HEK293 (cell line): ENCODE measurements at regions of chr6 and their contacts with region 1.

Region 1: GRCh38 chr6:16128759-16129622 is at the start of gene MYLIP:
- H3K4me3 ChIP-seq: peak within 1 kb of the TSS; percentile 98
- H3K27ac ChIP-seq: peak within 1 kb of the TSS; percentile 95
- H3K4me1 ChIP-seq: peaks cover 21% of the 10 kb centered on the region
- CTCF ChIP-seq: peak; percentile 95

Region 2: GRCh38 chr6:15691250-15691869 is 437.6 kb before region 1 on chr6:
- CTCF ChIA-PET with region 1: interaction called, 31 read pairs
- POLR2A ChIA-PET with region 1: interaction called, 21 read pairs
- H3K4me3 ChIP-seq: peak overlapping the region; percentile 3
- H3K27ac ChIP-seq: no peak overlapping the region
- H3K4me1 ChIP-seq: no peaks in the 10 kb centered on the region
- CTCF ChIP-seq: peak; percentile 99

Region 3: DNA sequence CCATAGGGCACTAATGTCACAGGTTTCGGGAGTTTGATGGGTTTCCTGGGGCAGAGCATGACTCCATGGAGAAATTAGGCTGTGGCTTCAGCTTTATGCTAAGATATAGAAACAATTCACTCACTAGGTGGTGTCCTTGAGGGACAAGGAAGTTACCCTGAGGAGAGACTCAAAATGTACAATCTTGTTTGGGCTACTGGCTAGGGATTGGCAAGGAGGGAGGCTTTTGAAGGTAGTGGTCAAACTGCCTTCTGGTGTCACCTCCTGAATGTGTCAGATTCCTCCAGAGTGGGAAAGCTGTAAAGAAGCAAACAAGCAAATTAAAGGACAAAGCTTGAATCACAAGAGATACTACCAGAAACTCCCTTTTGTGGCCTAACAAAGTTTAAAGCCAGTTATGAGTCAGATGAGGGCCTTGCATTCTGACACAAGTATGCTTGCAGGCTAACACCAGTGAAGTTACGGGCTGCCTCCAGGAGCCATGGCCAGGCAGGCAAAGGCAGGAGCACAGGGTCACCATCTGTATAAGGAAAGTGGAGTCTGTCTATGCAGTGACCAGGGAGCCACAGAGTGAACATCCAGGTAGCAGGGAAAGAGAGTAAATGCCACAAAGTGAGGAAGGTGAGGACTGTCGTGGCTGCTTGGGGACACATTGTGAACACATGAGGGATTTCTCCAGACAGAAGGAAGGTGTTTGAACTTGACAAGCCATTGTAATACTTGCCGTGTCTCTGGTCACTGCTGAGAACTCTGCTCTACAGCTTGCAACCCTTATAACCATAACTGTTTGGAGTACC is 358.4 kb before region 1 on chr6:
- CTCF ChIA-PET with region 1: no interaction called
- POLR2A ChIA-PET with region 1: interaction called, 13 read pairs
- H3K4me3 ChIP-seq: no peak overlapping the region
- H3K27ac ChIP-seq: no peak overlapping the region
- H3K4me1 ChIP-seq: peaks cover 8% of the 10 kb centered on the region; the same call in 1 of the 2 replicates
- CTCF ChIP-seq: 0 out of 2 replicates have a peak, but pooled peaks have one; percentile 34

Region 4: DNA sequence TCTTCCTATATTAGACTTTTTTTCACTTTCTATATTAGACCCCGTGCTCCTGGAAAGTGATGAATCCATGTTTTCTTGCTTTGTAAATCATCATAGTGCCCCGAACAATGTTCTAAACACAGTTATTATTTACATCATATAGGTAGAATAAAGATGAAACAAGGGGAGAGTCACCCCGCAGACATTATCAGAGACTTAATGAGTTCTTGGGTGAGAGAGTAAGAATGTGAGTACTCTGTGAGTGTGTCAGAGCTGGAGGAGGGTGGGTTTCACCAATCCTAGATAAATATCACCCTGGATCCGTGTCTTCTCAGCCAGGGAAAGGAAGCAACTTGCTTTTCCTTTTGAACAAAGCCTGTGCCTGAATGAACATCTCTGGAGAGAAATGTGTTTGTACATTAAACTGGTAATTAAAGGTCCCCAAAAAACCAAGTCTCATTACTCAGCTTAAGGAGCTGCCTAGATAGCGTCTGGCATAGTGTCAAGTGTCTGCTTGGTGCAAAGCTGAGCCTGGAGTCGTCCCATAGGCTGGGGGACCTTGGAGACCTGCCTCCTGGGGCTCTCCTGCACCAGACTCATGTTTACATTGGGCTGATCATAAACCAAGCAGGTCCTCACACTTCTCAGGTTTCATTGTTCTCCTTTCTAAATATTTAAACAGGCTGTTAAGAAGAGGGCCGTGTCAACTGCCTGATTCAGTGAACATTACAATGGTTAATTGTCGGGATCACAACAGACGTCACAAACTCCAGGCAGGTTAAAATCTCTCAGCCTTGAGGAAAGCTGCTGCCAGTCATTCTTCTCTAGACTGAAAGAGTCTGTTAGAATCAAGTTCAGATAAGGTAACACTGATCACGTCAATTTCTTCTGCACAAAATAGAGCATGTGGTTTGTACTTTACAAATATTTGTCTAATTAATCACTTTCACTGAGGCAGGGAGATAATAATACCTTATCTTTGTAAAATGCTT is 179.8 kb before region 1 on chr6:
- CTCF ChIA-PET with region 1: interaction called, 3 read pairs
- POLR2A ChIA-PET with region 1: interaction called, 23 read pairs
- H3K4me3 ChIP-seq: no peak overlapping the region
- H3K27ac ChIP-seq: peak overlapping the region; percentile 80
- H3K4me1 ChIP-seq: peaks cover 54% of the 10 kb centered on the region
- CTCF ChIP-seq: no peak

Region 5: DNA sequence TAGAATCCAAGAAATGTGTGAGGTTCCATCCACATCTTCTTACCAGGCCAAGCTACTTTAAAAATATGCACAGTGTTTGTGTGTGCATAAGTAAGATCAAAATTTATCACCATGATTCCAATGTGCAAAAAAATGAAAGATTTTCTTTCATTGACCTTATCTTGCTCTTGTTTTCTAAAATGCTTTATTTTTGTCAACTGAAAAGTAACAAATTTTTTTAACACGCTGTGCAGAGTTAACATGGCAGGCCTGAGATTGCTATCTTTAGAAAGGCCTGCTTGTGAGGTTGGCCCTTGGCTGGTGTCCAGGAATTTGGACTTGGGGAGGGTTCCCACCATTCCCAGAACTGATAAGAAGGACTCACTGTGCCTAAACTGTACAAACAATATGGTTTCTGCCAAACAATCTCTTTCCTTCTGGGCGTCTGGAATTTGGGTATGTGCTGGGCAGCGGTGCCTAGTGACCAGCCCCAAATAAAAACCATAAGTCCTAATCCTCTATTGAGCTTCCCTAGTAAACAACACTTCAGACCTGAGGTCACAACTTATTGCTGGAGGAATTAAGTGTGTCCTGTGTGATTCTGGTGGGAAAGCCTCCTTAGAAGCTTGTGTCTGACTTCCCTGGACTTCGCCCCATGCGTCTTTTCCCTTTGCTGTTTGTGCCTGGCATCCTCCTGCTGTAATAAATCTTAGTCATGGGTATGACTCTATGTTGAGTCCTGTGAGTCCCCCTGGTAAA is 19.9 kb before region 1 on chr6:
- CTCF ChIA-PET with region 1: interaction called, 5 read pairs
- POLR2A ChIA-PET with region 1: interaction called, 11 read pairs
- H3K4me3 ChIP-seq: no peak overlapping the region
- H3K27ac ChIP-seq: no peak overlapping the region; the same call in 1 of the 2 replicates
- H3K4me1 ChIP-seq: peaks cover 22% of the 10 kb centered on the region
- CTCF ChIP-seq: no peak

Region 6: DNA sequence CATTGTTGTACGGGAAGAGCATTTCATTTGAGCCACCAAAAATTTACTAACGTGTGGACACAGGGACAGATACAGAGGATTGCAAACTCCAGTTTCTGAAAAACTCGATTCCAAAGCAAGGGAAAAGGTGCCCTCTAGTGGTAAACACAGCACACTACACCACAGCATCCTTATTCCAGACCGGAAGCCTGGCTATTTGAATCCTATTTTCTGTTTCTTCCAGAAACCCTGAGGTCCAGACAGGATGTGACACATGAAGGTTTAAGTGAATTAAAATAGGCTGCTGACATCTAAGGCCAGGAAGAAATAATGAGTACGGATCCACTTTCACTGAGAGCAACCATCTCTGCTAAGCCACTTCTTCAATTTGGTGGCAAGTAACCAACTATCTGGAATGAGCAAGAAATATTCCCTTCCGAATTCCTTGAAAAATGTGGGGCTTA is 77.6 kb after region 1 on chr6:
- CTCF ChIA-PET with region 1: interaction called, 8 read pairs
- POLR2A ChIA-PET with region 1: interaction called, 36 read pairs
- H3K4me3 ChIP-seq: no peak overlapping the region
- H3K27ac ChIP-seq: peak overlapping the region; percentile 89; the same call in 1 of the 2 replicates
- H3K4me1 ChIP-seq: peaks cover 8% of the 10 kb centered on the region
- CTCF ChIP-seq: peak; percentile 70

Region 7: DNA sequence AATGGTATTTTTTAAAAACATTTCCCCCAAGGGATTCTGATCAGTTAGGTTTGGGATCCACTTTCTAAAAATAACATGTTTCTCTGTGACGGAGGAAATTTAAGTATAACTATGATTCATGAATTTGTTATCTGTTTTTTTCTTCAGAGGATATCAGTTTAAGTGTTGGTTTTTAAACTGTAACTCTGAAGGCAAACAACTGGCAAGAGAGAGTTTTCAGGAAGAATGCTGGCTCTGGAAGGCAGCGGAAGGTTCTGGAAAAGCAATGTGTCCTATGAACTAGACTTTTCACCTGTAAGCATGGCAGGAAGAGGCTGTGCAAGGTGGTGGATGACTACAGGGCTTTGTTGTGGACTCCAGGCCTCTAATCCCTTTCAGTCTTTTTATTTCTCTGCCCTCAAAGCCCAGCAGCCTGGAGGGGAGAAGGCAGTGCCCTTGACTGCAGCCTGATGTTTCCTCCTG is 262.5 kb after region 1 on chr6:
- CTCF ChIA-PET with region 1: no interaction called
- POLR2A ChIA-PET with region 1: no interaction called
- H3K4me3 ChIP-seq: no peak overlapping the region
- H3K27ac ChIP-seq: no peak overlapping the region
- H3K4me1 ChIP-seq: no peaks in the 10 kb centered on the region
- CTCF ChIP-seq: no peak